Mammary epithelial cell (primary cell): ENCODE measurements at regions of chr17 and their contacts with region 1.

Region 1: DNA sequence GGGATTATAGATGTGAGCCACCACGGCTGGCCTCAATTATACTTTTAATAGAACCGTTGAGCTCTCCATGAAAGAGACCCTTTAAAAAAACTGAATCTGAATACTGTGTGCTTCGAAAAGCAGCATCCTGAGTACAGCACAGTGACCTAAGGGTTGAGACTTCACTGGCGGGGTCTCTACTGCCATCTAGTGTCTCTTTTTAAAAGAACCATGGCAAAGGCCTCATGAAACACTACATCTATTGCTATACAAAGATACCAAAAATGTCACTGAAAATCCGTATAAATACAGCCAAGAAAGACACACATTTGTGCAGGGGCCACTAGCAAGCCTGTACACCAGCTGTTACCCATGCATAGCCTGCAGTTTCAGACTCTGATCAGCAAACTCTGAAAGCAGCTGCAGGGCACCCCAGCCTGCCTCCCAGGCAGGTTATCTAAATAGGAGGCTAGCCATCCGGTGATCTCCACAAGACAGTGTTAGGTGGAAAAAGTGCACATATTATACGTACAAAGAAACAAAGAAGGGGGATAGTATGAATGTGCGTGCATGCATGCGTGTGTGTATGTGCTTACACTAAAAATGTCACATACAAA is 35.3 kb downstream of the NPLOC4 start:
- DNase-seq: peak; percentile 36
- H3K4me3 ChIP-seq: no peak overlapping the region
- H3K27ac ChIP-seq: no peak overlapping the region
- H3K4me1 ChIP-seq: no peaks in the 10 kb centered on the region
- H3K27me3 ChIP-seq: no peaks in the 10 kb centered on the region
- CTCF ChIP-seq: peak; percentile 81 to 82

Region 2: GRCh38 chr17:81142301-81143199 is 459.1 kb before region 1 on chr17:
- CTCF ChIA-PET with region 1: no interaction called
- dilution Hi-C with region 1: no loop called
- in situ Hi-C with region 1: no loop called
- intact Hi-C with region 1: loop called (anchors 5 kb)
- DNase-seq: peak; percentile 60
- H3K4me3 ChIP-seq: no peak overlapping the region
- H3K27ac ChIP-seq: no peak overlapping the region
- H3K4me1 ChIP-seq: peaks cover 5% of the 10 kb centered on the region
- H3K27me3 ChIP-seq: no peaks in the 10 kb centered on the region
- CTCF ChIP-seq: peak; percentile 59 to 74

Region 3: DNA sequence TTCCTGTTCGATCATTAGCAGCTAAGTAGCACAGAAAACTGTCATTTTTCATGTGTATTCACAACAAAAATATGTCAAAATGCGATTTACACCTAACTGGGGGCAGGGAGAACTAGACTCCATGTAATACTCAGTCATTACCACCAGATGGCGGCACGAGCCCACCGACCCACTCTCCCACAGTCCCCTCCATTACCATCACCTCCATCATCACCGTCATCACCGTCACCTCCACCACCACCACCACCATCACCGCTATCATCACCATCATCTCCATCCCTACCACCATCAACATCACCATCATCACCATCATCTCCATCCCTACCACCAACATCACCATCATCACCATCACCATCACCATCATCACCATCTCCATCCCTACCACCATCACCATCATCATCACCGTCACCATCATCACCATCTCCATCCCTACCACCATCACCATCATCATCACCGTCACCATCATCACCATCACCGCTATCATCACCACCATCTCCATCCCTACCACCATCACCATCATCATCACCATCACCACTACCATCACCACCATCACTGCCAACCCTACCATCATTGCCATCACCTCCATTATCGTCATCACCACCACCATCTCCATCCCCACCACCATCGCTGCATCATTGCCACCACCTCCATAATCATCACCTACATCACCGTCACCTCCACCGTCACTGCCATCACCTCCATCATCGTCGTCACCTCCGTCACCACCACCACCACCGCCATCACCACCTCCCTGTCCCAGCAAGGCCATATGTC is 348.1 kb before region 1 on chr17:
- CTCF ChIA-PET with region 1: no interaction called
- dilution Hi-C with region 1: no loop called
- in situ Hi-C with region 1: no loop called
- intact Hi-C with region 1: loop called (anchors 1 kb)
- DNase-seq: no peak
- H3K4me3 ChIP-seq: no peak overlapping the region
- H3K27ac ChIP-seq: no peak overlapping the region
- H3K4me1 ChIP-seq: no peaks in the 10 kb centered on the region
- H3K27me3 ChIP-seq: no peaks in the 10 kb centered on the region
- CTCF ChIP-seq: peak; percentile 61 to 66

Region 4: DNA sequence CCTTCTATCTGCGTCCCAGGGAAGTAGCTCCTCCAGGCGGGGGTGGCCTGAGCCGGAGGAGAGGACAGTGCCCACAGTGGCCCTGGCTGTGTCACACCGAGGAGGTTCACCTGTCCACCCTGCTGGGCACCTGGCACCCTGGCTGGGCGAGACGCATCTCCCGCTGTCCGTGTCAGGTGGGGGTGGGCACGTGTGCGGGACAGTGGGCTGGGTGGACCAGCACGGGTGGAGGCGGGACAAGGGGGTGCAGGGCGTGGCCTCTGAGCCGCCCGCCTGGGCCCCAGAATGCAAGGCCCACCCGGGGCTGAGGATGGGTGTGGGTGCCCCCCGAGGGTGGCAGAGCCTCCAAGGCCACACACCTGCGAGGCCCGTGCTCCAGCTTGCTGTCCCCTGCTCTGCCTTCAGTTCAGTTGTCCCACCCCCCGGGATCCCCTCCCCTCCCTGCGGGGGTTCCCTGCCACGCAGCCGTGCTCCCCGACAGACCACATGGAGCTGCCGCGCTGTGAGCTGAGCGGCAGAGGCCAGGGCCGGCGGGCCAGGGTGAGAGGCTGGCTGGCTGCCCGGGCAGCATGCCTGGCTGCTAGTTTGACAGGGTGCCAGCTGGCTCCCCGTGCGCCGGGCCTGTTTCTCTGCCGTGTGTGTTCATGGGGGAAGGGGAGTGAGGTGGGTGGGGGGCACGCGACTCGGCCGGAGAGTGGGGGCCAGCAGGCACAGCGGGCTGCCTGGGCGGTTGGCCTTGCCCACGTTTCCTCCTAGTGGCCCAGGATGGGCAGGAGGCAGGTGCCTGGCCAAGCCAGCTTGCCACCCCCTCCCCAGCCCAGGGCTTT is 172.5 kb before region 1 on chr17:
- CTCF ChIA-PET with region 1: no interaction called
- dilution Hi-C with region 1: no loop called
- in situ Hi-C with region 1: no loop called
- intact Hi-C with region 1: loop called (anchors 10 kb)
- DNase-seq: peak; percentile 64
- H3K4me3 ChIP-seq: no peak overlapping the region
- H3K27ac ChIP-seq: no peak overlapping the region
- H3K4me1 ChIP-seq: peaks cover 15% of the 10 kb centered on the region
- H3K27me3 ChIP-seq: no peaks in the 10 kb centered on the region
- CTCF ChIP-seq: no peak

Region 5: GRCh38 chr17:81519284-81519955 is 82.2 kb before region 1 on chr17:
- CTCF ChIA-PET with region 1: no interaction called
- dilution Hi-C with region 1: no loop called
- in situ Hi-C with region 1: no loop called
- intact Hi-C with region 1: loop called (anchors 1 kb)
- DNase-seq: peak; percentile 40
- H3K4me3 ChIP-seq: peak overlapping the region; percentile 23 to 48 (median 45)
- H3K27ac ChIP-seq: no peak overlapping the region
- H3K4me1 ChIP-seq: peaks cover 46% of the 10 kb centered on the region
- H3K27me3 ChIP-seq: no peaks in the 10 kb centered on the region
- CTCF ChIP-seq: peak; percentile 43 to 62

Region 6: GRCh38 chr17:81553018-81553615 is 48.5 kb before region 1 on chr17:
- CTCF ChIA-PET with region 1: no interaction called
- dilution Hi-C with region 1: loop called (anchors 10 kb)
- in situ Hi-C with region 1: no loop called
- intact Hi-C with region 1: loop called (anchors 2 kb)
- DNase-seq: peak; percentile 80
- H3K4me3 ChIP-seq: peak overlapping the region; percentile 90 to 95 (median 91)
- H3K27ac ChIP-seq: no peak overlapping the region
- H3K4me1 ChIP-seq: peaks cover 28% of the 10 kb centered on the region
- H3K27me3 ChIP-seq: no peaks in the 10 kb centered on the region
- CTCF ChIP-seq: peak in 1 of 2 donors; percentile 37

Region 7: GRCh38 chr17:81566461-81567126 is 35.0 kb before region 1 on chr17:
- CTCF ChIA-PET with region 1: no interaction called
- dilution Hi-C with region 1: no loop called
- in situ Hi-C with region 1: no loop called
- intact Hi-C with region 1: loop called (anchors 5 kb)
- DNase-seq: peak; percentile 79
- H3K4me3 ChIP-seq: peak overlapping the region in 2 of 3 experiments; percentile 10 to 12
- H3K27ac ChIP-seq: peak overlapping the region; percentile 8
- H3K4me1 ChIP-seq: peaks cover 33% of the 10 kb centered on the region
- H3K27me3 ChIP-seq: no peaks in the 10 kb centered on the region
- CTCF ChIP-seq: no peak